HCT116 (cell line): ENCODE measurements at regions of chr2 and their contacts with region 1.

Region 1: GRCh38 chr2:45643543-45644542 is 7.6 kb upstream of the PRKCE start:
- DNase-seq: no peak
- ATAC-seq: peak; percentile 98
- H3K4me3 ChIP-seq: peak overlapping the region; percentile 41 to 58
- H3K27ac ChIP-seq: no peak overlapping the region
- H3K4me1 ChIP-seq: peaks cover 6 to 14% of the 10 kb centered on the region in 2 experiments; a peak in 2 of 4 replicates
- H3K27me3 ChIP-seq: no peaks in the 10 kb centered on the region
- CTCF ChIP-seq: peak; percentile 82 to 87 (median 87)
- POLR2A ChIP-seq: no peak
- RAD21 ChIP-seq: peak; percentile 99

Region 2: GRCh38 chr2:45712570-45712969 is 68.7 kb after region 1 on chr2:
- CTCF ChIA-PET with region 1: no interaction called
- POLR2A ChIA-PET with region 1: no interaction called
- RAD21 ChIA-PET with region 1: no interaction called
- intact Hi-C with region 1: loop called (anchors 5 kb)
- DNase-seq: no peak
- ATAC-seq: peak; percentile 57; the same call in 1 of the 2 replicates
- H3K4me3 ChIP-seq: no peak overlapping the region
- H3K27ac ChIP-seq: no peak overlapping the region
- H3K4me1 ChIP-seq: peaks cover 0 to 4% of the 10 kb centered on the region in 2 experiments; a peak in 1 of 4 replicates
- H3K27me3 ChIP-seq: no peaks in the 10 kb centered on the region
- CTCF ChIP-seq: peak in 1 of 3 experiments; percentile 22; a peak in 1 of 6 replicates
- POLR2A ChIP-seq: no peak
- RAD21 ChIP-seq: peak; percentile 71

Region 3: DNA sequence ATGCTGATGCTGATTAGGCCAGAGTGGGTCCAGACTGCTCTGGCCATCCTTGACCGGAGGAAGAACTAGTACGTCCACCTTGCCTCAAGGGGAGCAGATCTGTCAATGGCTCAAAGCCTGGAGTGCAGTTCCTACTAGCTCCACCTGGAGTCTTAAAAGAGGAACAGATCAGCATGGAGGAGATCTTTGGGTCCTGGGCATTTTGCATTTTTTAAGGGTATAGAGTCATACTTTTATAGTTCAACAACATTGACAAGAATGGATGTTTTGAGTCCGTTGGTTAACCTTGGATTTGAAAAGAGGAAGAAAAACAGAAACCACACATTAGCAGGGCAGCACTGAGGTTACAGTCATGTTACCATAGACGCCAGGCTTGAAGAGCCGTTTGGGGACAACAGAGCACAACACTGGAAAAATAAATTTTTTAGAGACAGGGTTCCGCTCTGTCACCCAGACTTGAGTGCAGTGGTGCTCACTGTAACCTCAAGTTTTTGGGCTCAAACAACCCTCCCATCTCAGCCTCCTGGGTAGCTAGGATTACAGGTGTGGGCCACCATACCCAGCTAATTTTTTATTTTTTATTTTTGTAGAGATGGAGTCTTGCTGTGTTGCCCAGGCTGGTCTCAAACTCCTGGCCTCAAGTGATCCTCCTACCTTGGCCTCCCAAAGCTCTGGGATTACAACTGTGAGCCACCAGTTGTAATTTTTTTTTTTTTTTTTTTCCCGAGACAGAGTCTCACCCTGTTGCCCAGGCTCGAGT is 86.1 kb after region 1 on chr2:
- CTCF ChIA-PET with region 1: no interaction called
- POLR2A ChIA-PET with region 1: no interaction called
- RAD21 ChIA-PET with region 1: no interaction called
- intact Hi-C with region 1: loop called (anchors 5 kb)
- DNase-seq: peak; percentile 13
- ATAC-seq: peak; percentile 93
- H3K4me3 ChIP-seq: no peak overlapping the region
- H3K27ac ChIP-seq: no peak overlapping the region
- H3K4me1 ChIP-seq: no peaks in the 10 kb centered on the region
- H3K27me3 ChIP-seq: no peaks in the 10 kb centered on the region
- CTCF ChIP-seq: peak; percentile 34 to 54 (median 51); a peak in 5 of 6 replicates
- POLR2A ChIP-seq: no peak
- RAD21 ChIP-seq: peak; percentile 47; the same call in 1 of the 2 replicates

Region 4: DNA sequence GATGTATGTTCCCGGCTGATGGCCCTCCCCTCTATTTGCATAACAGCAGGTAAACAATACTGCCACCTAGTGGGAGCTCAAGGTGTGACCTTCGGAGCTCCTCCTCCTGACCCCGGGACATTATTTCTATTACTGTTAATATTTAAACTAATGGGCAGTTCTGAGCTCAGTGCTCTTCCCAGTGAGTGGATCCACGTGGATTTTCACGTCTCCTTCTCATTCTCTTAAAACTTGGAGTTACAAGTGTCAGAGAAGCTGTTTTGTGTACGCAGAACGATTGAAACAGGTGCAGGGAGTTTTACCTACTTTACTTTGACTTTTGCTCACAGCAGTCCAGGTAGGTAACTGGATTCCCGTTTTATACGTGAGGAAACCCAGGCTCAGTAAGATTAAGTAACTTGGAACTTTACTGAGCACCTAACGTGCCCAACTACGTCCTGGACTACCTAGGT is 134.9 kb after region 1 on chr2:
- CTCF ChIA-PET with region 1: interaction called, 16 read pairs
- POLR2A ChIA-PET with region 1: no interaction called
- RAD21 ChIA-PET with region 1: interaction called, 3 to 6 read pairs
- intact Hi-C with region 1: loop called (anchors 1 kb)
- DNase-seq: peak; percentile 64
- ATAC-seq: peak; percentile 97
- H3K4me3 ChIP-seq: no peak overlapping the region
- H3K27ac ChIP-seq: no peak overlapping the region
- H3K4me1 ChIP-seq: peaks cover 0 to 17% of the 10 kb centered on the region in 2 experiments; a peak in 3 of 4 replicates
- H3K27me3 ChIP-seq: no peaks in the 10 kb centered on the region
- CTCF ChIP-seq: peak; percentile 75 to 80 (median 78)
- POLR2A ChIP-seq: no peak
- RAD21 ChIP-seq: peak; percentile 72

Region 5: DNA sequence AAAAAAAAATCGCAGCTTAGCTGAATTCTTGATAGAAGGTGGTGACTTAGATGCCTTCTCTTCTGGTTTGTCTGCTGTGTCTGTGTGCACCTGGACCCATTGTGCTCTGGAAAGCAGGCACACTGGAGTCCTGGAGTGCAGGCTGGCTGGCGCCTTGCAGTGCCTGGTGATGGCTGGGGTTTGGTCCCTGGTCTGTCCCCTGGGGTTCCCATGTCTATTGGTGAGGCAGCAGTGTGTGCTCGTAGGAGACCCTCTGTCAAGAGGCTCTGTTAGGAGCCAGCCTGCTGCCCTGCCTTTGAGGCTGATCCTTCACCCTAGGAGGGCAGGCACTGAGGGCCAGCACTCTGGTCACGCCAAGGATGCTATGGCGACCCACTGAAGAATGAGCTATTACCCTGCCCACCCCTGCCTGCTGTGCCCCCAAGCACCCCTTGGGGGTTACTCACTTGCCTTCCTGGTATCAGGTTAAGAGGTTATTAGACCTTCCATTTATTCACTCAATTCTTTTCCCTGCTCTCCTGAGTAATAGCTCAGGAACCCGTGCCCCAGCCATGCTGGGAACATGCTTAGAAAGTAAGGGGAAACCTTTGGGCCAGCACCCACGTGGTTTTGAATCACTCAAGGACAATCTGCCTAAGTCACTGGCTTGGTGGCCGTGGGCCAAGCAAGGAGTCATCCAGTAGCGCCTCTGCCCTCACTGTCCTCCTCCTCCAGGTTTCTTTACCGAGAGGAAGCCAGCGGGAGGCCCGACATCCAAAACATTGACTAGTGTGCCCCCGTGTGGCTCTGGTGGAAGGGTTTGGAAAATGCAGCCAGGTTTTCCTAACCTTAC is 292.2 kb after region 1 on chr2:
- CTCF ChIA-PET with region 1: interaction called, 6 read pairs
- POLR2A ChIA-PET with region 1: no interaction called
- RAD21 ChIA-PET with region 1: no interaction called
- intact Hi-C with region 1: loop called (anchors 1 kb)
- DNase-seq: peak; percentile 97
- ATAC-seq: peak; percentile 77
- H3K4me3 ChIP-seq: peak overlapping the region in 1 of 2 experiments; percentile 24; a peak in 1 of 4 replicates
- H3K27ac ChIP-seq: peak overlapping the region; percentile 28; the same call in 1 of the 2 replicates
- H3K4me1 ChIP-seq: peaks cover 39 to 62% of the 10 kb centered on the region in 2 experiments
- H3K27me3 ChIP-seq: no peaks in the 10 kb centered on the region
- CTCF ChIP-seq: peak; percentile 68 to 86 (median 75)
- POLR2A ChIP-seq: no peak
- RAD21 ChIP-seq: peak; percentile 98

Region 6: GRCh38 chr2:45993476-45993991 is 349.7 kb after region 1 on chr2:
- CTCF ChIA-PET with region 1: no interaction called
- POLR2A ChIA-PET with region 1: no interaction called
- RAD21 ChIA-PET with region 1: no interaction called
- intact Hi-C with region 1: loop called (anchors 5 kb)
- DNase-seq: peak; percentile 64
- ATAC-seq: peak; percentile 86
- H3K4me3 ChIP-seq: no peak overlapping the region
- H3K27ac ChIP-seq: no peak overlapping the region
- H3K4me1 ChIP-seq: peaks cover 0 to 21% of the 10 kb centered on the region in 2 experiments; a peak in 1 of 4 replicates
- H3K27me3 ChIP-seq: no peaks in the 10 kb centered on the region
- CTCF ChIP-seq: peak; percentile 58 to 82 (median 76); a peak in 5 of 6 replicates
- POLR2A ChIP-seq: no peak
- RAD21 ChIP-seq: peak; percentile 79

Region 7: GRCh38 chr2:46461011-46461674 is 817.3 kb after region 1 on chr2:
- CTCF ChIA-PET with region 1: no interaction called
- POLR2A ChIA-PET with region 1: no interaction called
- RAD21 ChIA-PET with region 1: no interaction called
- intact Hi-C with region 1: loop called (anchors 2 kb)
- DNase-seq: peak; percentile 36
- ATAC-seq: peak; percentile 78
- H3K4me3 ChIP-seq: no peak overlapping the region
- H3K27ac ChIP-seq: no peak overlapping the region
- H3K4me1 ChIP-seq: no peaks in the 10 kb centered on the region
- H3K27me3 ChIP-seq: no peaks in the 10 kb centered on the region
- CTCF ChIP-seq: peak; percentile 94 to 99 (median 99)
- POLR2A ChIP-seq: no peak
- RAD21 ChIP-seq: peak; percentile 100